H1 (cell line): ENCODE measurements at regions of chr19 and their contacts with region 1.

Region 1: DNA sequence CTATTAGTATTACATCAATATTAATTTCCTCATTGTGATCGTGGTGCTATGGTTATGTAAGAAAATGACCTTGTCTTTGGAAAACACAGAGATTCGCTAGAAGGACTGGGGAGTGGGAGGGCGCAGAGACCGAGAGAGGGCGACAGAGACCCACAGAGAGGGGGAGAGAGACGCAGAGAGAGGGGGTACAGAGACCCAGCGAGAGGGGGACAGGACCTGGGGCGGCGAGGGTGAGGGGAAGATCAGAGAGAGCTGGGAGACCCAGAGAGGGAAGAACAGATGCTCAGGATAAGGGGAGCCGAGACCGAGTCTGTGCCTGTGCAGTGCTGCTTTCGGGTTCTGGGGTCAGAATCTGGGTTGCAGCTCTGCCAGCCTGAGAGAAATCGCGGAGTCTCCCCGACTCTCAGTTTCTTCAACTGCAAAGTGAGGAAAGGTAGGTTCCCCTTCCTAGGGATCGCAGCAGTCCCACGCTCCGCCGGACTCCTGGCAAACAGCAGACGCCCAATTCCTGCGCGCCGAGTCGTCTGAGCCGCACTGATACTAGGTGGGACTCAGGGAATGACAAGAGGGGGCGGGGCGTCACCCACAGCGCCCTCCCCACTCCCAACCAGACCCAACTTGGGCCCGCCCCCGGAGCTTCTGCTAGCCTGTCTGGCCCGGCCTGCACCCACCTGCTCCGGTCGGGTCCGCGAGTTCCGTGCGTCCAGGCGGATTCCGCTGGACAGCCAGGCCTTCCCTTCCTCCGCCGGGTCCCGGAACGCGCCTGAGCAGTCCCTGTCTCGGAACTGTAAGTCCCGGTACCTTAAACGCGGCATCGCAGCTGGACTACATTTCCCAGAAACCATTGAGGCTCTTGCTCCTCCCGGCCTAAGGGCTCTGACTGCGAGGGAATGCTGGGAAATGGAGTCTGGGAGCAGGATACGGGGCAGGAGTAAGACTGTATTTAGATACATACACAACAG is 15.3 kb downstream of the IZUMO2 start:
- DNase-seq: peak in 1 of 2 experiments; percentile 86
- H3K4me3 ChIP-seq: peak overlapping the region; percentile 73 to 88 (median 77)
- H3K27ac ChIP-seq: no peak overlapping the region
- H3K4me1 ChIP-seq: no peaks in the 10 kb centered on the region
- H3K27me3 ChIP-seq: 0 out of 7 replicates have a peak, but pooled peaks cover 0 to 2% (median under 1%) of the 10 kb centered on the region in 4 experiments
- CTCF ChIP-seq: peak; percentile 65 to 73 (median 67)
- EP300 ChIP-seq: no peak
- POLR2A ChIP-seq: no peak
- RAD21 ChIP-seq: peak; percentile 77 to 83

Region 2: DNA sequence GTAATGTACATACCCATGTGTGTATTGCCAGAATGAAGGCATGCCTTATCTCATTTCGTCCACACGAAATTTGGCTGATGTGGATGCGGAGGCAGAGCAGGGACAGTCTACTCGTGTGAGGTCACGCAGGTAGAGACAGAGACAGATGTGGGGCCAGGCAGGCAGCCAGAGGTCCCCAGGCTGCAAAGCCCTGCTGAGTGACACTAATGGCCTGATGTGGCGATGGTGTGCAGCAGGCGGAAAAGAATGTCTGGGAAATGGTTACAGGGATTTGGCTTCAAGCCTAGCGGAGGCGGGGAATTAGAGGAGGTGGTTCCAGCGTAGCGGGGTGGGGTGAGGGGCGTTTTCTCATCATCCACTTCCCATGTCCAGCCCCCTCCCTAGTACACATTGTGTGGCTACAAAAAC is 19.6 kb after region 1 on chr19:
- CTCF ChIA-PET with region 1: interaction called, 25 read pairs
- POLR2A ChIA-PET with region 1: interaction called, 3 read pairs
- DNase-seq: no peak
- H3K4me3 ChIP-seq: no peak overlapping the region
- H3K27ac ChIP-seq: no peak overlapping the region
- H3K4me1 ChIP-seq: peaks cover 0 to 3% (median 0%) of the 10 kb centered on the region in 4 experiments; a peak in 1 of 7 replicates
- H3K27me3 ChIP-seq: no peaks in the 10 kb centered on the region
- CTCF ChIP-seq: no peak
- EP300 ChIP-seq: no peak
- POLR2A ChIP-seq: no peak
- RAD21 ChIP-seq: no peak

Region 3: DNA sequence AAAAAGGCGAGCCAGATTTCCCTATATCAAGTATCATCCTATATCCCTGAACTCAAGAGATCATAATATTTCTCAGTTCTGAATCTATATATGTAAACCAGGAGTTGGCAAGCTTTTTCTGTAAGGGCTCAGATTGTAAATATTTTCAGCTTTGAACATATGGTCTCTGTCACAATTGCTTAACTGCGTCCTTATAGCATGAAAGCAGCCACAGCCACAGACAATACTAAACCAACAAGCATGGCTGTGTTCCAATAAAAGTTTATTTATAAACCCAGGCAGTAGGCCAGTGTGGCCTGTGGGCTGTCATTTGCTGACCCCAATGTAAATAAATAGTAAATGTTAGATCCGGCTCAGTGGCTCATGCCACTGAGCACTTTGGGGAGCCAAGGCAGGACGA is 43.5 kb after region 1 on chr19:
- CTCF ChIA-PET with region 1: no interaction called
- POLR2A ChIA-PET with region 1: no interaction called
- DNase-seq: no peak
- H3K4me3 ChIP-seq: no peak overlapping the region
- H3K27ac ChIP-seq: no peak overlapping the region
- H3K4me1 ChIP-seq: no peaks in the 10 kb centered on the region
- H3K27me3 ChIP-seq: no peaks in the 10 kb centered on the region; a peak in 1 of 7 replicates
- CTCF ChIP-seq: no peak
- EP300 ChIP-seq: no peak
- POLR2A ChIP-seq: no peak
- RAD21 ChIP-seq: no peak

Region 4: DNA sequence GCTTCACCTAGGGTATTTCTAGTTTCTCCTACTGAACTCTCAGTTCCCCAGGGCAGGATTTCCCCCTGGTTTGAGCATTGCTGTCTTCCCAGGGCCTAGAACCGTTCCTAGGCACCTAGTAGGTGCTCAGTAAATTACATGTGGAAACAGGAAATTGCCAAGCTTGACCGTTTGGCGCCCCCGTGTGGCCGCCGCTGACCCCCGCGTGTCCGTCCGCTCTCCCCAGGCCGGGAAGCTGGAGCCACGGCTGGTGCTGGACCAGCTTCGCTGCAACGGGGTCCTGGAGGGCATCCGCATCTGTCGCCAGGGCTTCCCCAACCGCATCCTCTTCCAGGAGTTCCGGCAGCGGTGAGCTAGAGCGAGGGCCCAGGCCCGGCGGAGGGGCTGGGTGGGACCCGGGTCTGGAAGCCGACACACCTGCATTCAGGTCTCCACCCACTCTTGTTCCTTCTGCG is 111.2 kb after region 1 on chr19:
- CTCF ChIA-PET with region 1: interaction called, 21 read pairs
- POLR2A ChIA-PET with region 1: no interaction called
- DNase-seq: peak; percentile 36 to 95
- H3K4me3 ChIP-seq: no peak overlapping the region
- H3K27ac ChIP-seq: no peak overlapping the region
- H3K4me1 ChIP-seq: no peaks in the 10 kb centered on the region; a peak in 1 of 7 replicates
- H3K27me3 ChIP-seq: no peaks in the 10 kb centered on the region
- CTCF ChIP-seq: peak; percentile 88 to 91 (median 90)
- EP300 ChIP-seq: no peak
- POLR2A ChIP-seq: no peak
- RAD21 ChIP-seq: peak; percentile 85 to 89